Activated CD4-positive, alpha-beta T cell treated with anti-CD3 and anti-CD28 coated beads, Interleukin-2, amount 10 ng/mL, durations not matched to agents 24 days and 14 days (primary cell): ENCODE measurements at regions of chr4 and their contacts with region 1.

Region 1: GRCh38 chr4:108018040-108018883 is 28.6 kb downstream of the HADH start:
- DNase-seq: peak; percentile 95
- H3K4me3 Mint-ChIP-seq: no peak overlapping the region
- H3K27ac Mint-ChIP-seq: no peak overlapping the region
- H3K4me1 Mint-ChIP-seq: peaks cover 20% of the 10 kb centered on the region
- H3K27me3 Mint-ChIP-seq: no peaks in the 10 kb centered on the region

Region 2: GRCh38 chr4:108492816-108493595 is 474.7 kb after region 1 on chr4:
- intact Hi-C with region 1: loop called (anchors 2 kb)
- DNase-seq: peak; percentile 69
- H3K4me3 Mint-ChIP-seq: no peak overlapping the region
- H3K27ac Mint-ChIP-seq: no peak overlapping the region
- H3K4me1 Mint-ChIP-seq: peaks cover 7% of the 10 kb centered on the region
- H3K27me3 Mint-ChIP-seq: peaks cover 4% of the 10 kb centered on the region

Region 3: GRCh38 chr4:108512615-108513505 is 494.6 kb after region 1 on chr4:
- intact Hi-C with region 1: loop called (anchors 5 kb)
- DNase-seq: peak; percentile 80
- H3K4me3 Mint-ChIP-seq: peak overlapping the region; percentile 53
- H3K27ac Mint-ChIP-seq: no peak overlapping the region
- H3K4me1 Mint-ChIP-seq: peaks cover 16% of the 10 kb centered on the region
- H3K27me3 Mint-ChIP-seq: peaks cover 4% of the 10 kb centered on the region

Region 4: GRCh38 chr4:108570993-108571569 is 552.8 kb after region 1 on chr4:
- intact Hi-C with region 1: loop called (anchors 1 kb)
- DNase-seq: no peak
- H3K4me3 Mint-ChIP-seq: no peak overlapping the region
- H3K27ac Mint-ChIP-seq: peak overlapping the region; percentile 13
- H3K4me1 Mint-ChIP-seq: peaks cover 14% of the 10 kb centered on the region
- H3K27me3 Mint-ChIP-seq: peaks cover 1% of the 10 kb centered on the region

Region 5: GRCh38 chr4:109406338-109406931 is 1388.2 kb after region 1 on chr4:
- intact Hi-C with region 1: loop called (anchors 10 kb)
- DNase-seq: peak; percentile 84
- H3K4me3 Mint-ChIP-seq: no peak overlapping the region
- H3K27ac Mint-ChIP-seq: no peak overlapping the region
- H3K4me1 Mint-ChIP-seq: peaks cover 2% of the 10 kb centered on the region
- H3K27me3 Mint-ChIP-seq: peaks cover 20% of the 10 kb centered on the region